ENCODE measurements at regions of chr7 and their contacts with region 1.

Region 1: DNA sequence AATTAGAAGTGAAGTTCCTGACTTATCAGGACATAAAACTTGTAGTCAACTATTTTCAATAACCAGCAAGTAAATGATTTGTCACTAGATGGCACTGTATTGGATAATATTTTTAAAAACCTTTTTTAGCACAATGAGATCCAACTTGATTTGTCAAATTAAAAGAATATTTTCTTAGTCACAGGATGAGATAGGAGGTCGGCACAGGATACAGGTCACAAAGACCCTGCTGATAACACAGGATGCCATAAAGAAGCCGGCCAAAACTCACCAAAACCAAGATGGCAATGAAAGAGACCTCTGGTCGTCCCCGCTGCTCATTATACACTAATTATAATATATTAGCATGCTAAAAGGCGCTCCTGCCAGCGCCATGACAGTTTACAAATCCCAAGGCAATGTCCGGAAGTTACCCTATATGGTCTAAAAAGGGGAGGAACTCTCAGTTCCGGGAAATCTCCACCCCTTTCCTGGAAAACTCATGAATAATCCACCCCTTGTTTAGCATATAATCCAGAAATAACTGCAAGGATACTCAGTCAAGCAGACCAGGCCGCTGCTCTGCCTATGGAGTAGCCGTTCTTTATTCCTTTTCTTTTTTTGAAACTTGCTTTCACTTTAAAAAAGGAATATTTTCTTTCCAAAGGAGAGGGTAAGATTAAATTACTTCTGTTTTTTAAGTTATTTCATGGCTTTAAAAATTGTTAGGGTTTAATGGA is 255.7 kb upstream of the MKLN1 start:
- DNase-seq: peak; percentile 92
- H3K4me3 Mint-ChIP-seq: no peak overlapping the region
- H3K27ac Mint-ChIP-seq: peak overlapping the region; percentile 46
- H3K4me1 Mint-ChIP-seq: peaks cover 40% of the 10 kb centered on the region
- H3K27me3 Mint-ChIP-seq: no peaks in the 10 kb centered on the region
- CTCF ChIP-seq: peak; percentile 23

Region 2: DNA sequence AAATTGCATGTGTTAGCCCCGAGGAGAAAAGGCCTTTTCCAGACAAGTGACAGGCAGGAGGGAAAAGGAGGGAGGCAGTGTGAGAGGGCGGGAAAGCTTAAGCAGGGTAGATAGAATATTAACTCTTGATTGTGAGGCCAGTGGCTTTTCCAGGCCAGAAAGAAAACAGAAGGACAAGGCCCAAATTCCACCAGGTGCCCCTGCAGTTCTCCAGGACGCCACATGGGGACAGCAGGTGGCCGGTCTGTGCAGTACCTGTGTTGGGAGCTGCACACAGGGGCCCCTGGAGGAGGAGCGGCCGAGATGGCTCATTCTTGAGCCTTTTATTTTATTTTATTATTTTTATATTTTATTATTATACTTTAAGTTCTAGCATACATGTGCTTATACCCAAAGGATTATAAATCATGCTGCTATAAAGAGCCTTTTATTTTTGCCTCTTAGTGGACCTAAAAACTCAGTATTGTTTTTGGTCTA is 196.6 kb before region 1 on chr7:
- CTCF ChIA-PET with region 1: interaction called, 13 read pairs
- POLR2A ChIA-PET with region 1: no interaction called
- intact Hi-C with region 1: no loop called
- DNase-seq: peak; percentile 69
- H3K4me3 Mint-ChIP-seq: no peak overlapping the region
- H3K27ac Mint-ChIP-seq: peak overlapping the region; percentile 89
- H3K4me1 Mint-ChIP-seq: peaks cover 41% of the 10 kb centered on the region
- H3K27me3 Mint-ChIP-seq: no peaks in the 10 kb centered on the region
- CTCF ChIP-seq: peak; percentile 92

Region 3: GRCh38 chr7:131057015-131057793 is 14.7 kb before region 1 on chr7:
- CTCF ChIA-PET with region 1: interaction called, 12 read pairs
- POLR2A ChIA-PET with region 1: interaction called, 5 read pairs
- intact Hi-C with region 1: no loop called
- DNase-seq: no peak
- H3K4me3 Mint-ChIP-seq: no peak overlapping the region
- H3K27ac Mint-ChIP-seq: peak overlapping the region; percentile 9
- H3K4me1 Mint-ChIP-seq: peaks cover 9% of the 10 kb centered on the region
- H3K27me3 Mint-ChIP-seq: no peaks in the 10 kb centered on the region
- CTCF ChIP-seq: no peak

Region 4: GRCh38 chr7:131293018-131293417 is 221.1 kb after region 1 on chr7:
- CTCF ChIA-PET with region 1: interaction called, 6 read pairs
- POLR2A ChIA-PET with region 1: interaction called, 15 read pairs
- intact Hi-C with region 1: no loop called
- DNase-seq: peak; percentile 10
- H3K4me3 Mint-ChIP-seq: no peak overlapping the region
- H3K27ac Mint-ChIP-seq: no peak overlapping the region
- H3K4me1 Mint-ChIP-seq: peaks cover 16% of the 10 kb centered on the region
- H3K27me3 Mint-ChIP-seq: no peaks in the 10 kb centered on the region
- CTCF ChIP-seq: no peak

Region 5: DNA sequence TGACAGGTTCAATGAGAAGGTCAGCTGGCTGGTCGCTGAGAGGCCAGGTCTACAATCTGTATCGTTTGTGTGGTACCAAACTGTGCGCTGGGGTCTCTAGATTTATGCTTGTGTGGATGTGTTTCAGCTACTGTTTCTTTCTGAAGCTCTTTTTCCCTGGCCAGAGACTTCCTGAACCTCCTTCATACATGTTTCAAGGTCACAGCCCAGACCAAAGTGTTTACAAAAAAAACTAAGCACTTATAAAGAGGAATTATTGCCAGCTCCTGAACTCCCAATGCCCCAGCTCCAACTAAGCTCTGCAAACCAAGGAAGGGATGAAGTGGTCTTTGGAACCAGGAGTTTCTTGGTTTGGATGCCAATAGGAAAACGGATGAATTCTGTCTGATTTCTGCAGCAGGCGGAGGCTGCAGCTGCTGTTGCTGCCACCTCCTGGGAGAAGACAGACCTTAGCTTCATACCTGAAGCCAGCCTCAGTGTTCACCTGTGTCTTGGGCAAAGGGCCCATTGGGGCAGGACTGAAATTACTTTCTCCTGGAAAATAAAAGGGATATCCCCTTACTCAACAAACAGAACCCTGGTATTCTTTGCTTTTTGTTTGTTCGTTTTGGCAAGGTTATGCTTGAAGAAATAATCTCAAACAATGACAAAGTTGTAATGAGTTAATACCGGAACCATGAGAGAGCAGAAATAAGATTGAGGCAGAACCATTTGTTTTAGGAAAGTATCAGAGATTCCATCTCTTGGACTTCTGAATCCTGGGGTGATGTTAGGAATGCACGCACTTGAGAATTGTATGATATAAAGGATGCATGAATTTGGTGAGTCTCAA is 231.1 kb after region 1 on chr7:
- CTCF ChIA-PET with region 1: interaction called, 33 read pairs
- POLR2A ChIA-PET with region 1: interaction called, 15 read pairs
- intact Hi-C with region 1: loop called (anchors 1 kb)
- DNase-seq: peak; percentile 57
- H3K4me3 Mint-ChIP-seq: no peak overlapping the region
- H3K27ac Mint-ChIP-seq: no peak overlapping the region
- H3K4me1 Mint-ChIP-seq: peaks cover 12% of the 10 kb centered on the region
- H3K27me3 Mint-ChIP-seq: no peaks in the 10 kb centered on the region
- CTCF ChIP-seq: peak; percentile 81

Region 6: GRCh38 chr7:131424219-131424822 is 352.4 kb after region 1 on chr7:
- CTCF ChIA-PET with region 1: interaction called, 8 read pairs
- POLR2A ChIA-PET with region 1: interaction called, 4 read pairs
- intact Hi-C with region 1: loop called (anchors 1 kb)
- DNase-seq: peak; percentile 39
- H3K4me3 Mint-ChIP-seq: no peak overlapping the region
- H3K27ac Mint-ChIP-seq: no peak overlapping the region
- H3K4me1 Mint-ChIP-seq: peaks cover 6% of the 10 kb centered on the region
- H3K27me3 Mint-ChIP-seq: no peaks in the 10 kb centered on the region
- CTCF ChIP-seq: peak; percentile 60